ENCODE measurements at regions of chr16 and their contacts with region 1.

Region 1: GRCh38 chr16:7688811-7689210 is 356.2 kb downstream of the RBFOX1 start:
- DNase-seq: no peak
- ATAC-seq: no peak
- H3K4me3 ChIP-seq: no peak overlapping the region
- H3K27ac ChIP-seq: no peak overlapping the region
- H3K4me1 ChIP-seq: no peaks in the 10 kb centered on the region
- H3K27me3 ChIP-seq: no peaks in the 10 kb centered on the region
- CTCF ChIP-seq: no peak
- POLR2A ChIP-seq: no peak

Region 2: DNA sequence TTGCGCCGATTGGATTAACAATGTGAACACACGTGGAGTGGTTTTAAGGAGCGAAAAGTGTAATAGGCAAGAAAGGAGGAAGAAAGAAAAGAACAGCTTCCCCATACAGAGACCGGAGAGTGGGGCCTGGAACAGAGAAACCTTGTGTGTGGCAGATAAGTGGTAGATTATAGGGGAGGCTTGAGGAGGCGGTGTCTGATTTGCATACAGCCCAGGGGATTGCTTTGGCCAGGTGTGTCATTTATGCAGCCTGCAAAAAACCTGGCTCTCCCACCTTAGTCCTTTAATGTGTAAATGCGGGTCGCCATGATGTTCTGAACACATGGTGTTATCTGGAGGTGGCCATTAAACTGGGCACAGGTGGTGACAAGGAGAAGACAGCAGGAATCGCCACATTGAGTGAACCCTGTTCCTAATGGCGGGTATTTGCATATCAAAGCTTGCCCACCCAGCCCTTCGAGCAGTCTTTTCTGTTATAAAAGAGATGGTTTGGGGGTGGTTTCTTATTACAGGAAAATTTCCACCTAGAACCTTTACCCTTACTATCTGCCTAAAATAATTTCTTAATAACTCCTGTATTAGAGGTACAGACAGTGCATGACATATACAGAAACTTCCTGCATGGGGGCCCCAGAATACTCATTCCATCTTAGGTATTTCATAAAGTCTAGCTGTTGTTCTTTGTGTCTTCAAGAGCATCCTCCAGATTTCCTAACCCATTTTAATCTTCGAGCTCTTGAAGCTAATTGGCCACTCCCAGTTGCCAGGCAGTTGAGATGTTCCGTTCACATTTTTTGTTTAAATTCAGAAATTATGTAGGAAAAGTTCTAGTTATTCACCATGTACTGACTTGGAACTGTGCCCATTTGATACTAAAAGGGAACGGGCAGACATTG is 63.7 kb before region 1 on chr16:
- intact Hi-C with region 1: loop called in 1 of 10 experiments (anchors 10 kb)
- DNase-seq: no peak
- ATAC-seq: no peak
- H3K4me3 ChIP-seq: no peak overlapping the region
- H3K27ac ChIP-seq: no peak overlapping the region
- H3K4me1 ChIP-seq: peaks cover 0 to 4% (median 0%) of the 10 kb centered on the region in 12 donors
- H3K27me3 ChIP-seq: no peaks in the 10 kb centered on the region
- CTCF ChIP-seq: no peak
- POLR2A ChIP-seq: no peak